ENCODE measurements at regions of chr6 and their contacts with region 1.

Region 1: GRCh38 chr6:162856885-162857284 is 129.1 kb downstream of the PACRG start:
- DNase-seq: peak in 8 of 10 donors; percentile 17 to 89 (median 52)

Region 2: DNA sequence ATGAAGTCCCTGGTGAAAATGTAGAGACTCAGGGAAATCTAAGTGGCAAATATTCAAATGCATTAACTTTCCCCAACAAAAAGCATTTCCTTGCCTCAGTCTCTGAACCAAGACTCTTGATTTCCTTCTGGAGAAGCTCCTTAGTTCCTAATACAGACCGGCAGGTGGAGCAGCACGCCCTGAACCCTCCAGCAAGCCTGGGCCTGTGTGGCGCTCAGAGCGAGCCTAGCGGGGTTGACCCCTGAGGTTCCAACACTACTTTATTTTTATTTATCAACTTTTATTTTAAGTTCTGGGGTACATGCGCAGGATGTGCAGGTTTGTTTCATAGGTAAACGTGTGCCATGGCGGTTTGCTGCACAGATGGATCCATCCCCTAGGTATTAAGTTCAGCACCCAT is 78.3 kb before region 1 on chr6:
- intact Hi-C with region 1: no loop called
- DNase-seq: peak in 1 of 10 donors; percentile 59

Region 3: DNA sequence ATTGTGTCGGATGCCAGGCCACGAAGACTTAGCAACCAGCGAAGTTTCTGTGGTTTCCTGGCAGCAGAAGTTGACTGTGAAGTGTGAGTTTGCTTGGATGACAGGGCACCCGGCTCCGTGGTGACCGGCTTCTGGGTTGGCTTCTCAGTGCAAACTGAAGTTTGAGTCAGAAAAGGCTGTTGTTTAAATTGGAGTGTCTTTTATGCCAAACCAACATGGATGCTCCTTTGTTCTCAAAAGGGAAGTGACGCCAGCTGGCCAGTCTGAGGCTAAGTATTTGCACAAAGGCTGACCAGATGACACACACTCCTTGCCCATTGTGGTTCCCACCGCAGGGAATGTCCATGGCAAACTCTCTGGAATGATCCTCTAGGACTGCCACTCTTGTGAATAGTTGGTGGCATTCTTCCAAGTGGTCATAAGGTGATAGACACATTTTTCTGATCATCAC is 392.8 kb after region 1 on chr6:
- intact Hi-C with region 1: loop called (anchors 5 kb)
- DNase-seq: peak in 6 of 10 donors; percentile 24 to 86 (median 46)

Region 4: GRCh38 chr6:163956571-163957407 is 1099.9 kb after region 1 on chr6:
- intact Hi-C with region 1: loop called (anchors 10 kb)
- DNase-seq: peak in 9 of 10 donors; percentile 45 to 95 (median 76)

Measured in posterior cingulate gyrus (tissue), 11 donors.